Activated CD8-positive, alpha-beta T cell treated with anti-CD3 and anti-CD28 coated beads, Interleukin-2, amount 10 ng/mL, durations not matched to agents 7 days and 5 days (primary cell): ENCODE measurements at regions of chr22 and their contacts with region 1.

Region 1: DNA sequence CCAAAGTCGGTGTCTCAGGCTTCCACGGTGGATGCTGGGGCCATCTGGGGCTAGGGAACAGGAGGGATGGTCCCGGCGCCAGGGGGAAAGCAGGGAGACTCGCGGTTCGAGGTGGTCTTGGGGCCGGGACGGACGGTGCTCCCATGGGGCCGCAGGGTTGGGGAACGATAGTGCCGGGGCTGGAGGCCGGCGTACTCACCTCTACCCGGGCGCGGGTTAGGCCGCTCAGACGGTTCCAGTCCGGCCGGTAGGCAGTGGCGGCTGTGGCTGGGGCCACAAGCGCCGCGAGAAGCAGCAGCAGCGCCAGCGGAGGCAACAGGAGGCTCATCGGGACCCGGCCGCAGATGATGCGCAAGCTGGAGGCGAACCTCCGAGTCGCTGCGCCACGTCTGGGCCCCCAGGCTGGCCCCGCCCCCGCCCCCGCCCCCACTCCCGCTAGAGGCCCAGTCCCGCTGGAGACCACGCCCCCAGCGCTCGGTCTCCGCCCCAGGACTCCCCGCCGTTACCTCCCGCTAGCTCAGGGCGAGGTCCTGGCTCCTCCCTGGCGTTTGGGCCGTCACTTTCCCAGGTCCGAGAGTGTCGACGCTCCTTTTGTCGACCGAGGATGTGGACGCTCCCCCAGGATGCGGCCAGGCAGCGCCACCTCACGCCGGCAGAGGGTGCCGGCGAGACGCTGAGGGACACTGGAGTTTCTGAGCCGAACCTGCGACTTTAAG is at the start of gene SELENOM:
- DNase-seq: peak; percentile 90
- ATAC-seq: peak; percentile 97
- H3K4me3 Mint-ChIP-seq: peak within 1 kb of the TSS; percentile 86
- H3K27ac Mint-ChIP-seq: peak within 1 kb of the TSS; percentile 72
- H3K4me1 Mint-ChIP-seq: peaks cover 10% of the 10 kb centered on the region
- H3K27me3 Mint-ChIP-seq: no peaks in the 10 kb centered on the region
- total RNA-seq, gene SELENOM: 0.76 to 0.87 TPM

Region 2: GRCh38 chr22:31036671-31037550 is 70.4 kb before region 1 on chr22:
- CTCF ChIA-PET with region 1: no interaction called
- POLR2A ChIA-PET with region 1: no interaction called
- DNase-seq: no peak
- ATAC-seq: no peak
- H3K4me3 Mint-ChIP-seq: no peak overlapping the region
- H3K27ac Mint-ChIP-seq: no peak overlapping the region
- H3K4me1 Mint-ChIP-seq: no peaks in the 10 kb centered on the region
- H3K27me3 Mint-ChIP-seq: no peaks in the 10 kb centered on the region

Region 3: DNA sequence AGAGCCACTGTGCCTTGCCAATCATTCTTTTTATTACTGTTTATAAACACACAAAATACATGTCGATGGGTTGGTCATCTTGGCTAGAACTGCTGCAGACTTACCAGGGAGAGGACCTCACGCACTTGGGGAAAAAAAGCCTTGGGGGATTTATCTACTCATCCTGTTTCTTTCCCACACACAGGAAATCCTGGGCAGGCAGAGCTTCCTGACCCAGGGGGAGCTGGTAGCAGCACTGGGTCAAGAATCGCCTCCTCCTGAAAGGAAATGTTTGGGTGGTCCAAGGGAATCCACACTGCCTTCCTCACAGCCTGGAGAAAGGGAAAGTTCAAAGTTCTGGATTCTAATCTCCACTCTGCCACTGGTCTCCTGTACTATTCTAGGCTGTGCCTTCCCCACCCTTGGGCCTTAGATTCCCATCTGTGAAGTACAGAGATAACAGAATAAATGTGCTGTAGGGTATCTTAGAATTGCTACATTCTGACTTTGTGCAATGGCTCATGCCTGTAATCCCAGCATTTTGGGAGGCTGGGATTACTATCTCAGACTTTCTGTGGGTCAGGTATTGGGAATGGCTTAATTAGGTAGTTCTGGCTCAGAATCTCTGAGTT is 57.4 kb before region 1 on chr22:
- CTCF ChIA-PET with region 1: no interaction called
- POLR2A ChIA-PET with region 1: no interaction called
- DNase-seq: no peak
- ATAC-seq: no peak
- H3K4me3 Mint-ChIP-seq: no peak overlapping the region
- H3K27ac Mint-ChIP-seq: no peak overlapping the region
- H3K4me1 Mint-ChIP-seq: no peaks in the 10 kb centered on the region
- H3K27me3 Mint-ChIP-seq: no peaks in the 10 kb centered on the region

Region 4: DNA sequence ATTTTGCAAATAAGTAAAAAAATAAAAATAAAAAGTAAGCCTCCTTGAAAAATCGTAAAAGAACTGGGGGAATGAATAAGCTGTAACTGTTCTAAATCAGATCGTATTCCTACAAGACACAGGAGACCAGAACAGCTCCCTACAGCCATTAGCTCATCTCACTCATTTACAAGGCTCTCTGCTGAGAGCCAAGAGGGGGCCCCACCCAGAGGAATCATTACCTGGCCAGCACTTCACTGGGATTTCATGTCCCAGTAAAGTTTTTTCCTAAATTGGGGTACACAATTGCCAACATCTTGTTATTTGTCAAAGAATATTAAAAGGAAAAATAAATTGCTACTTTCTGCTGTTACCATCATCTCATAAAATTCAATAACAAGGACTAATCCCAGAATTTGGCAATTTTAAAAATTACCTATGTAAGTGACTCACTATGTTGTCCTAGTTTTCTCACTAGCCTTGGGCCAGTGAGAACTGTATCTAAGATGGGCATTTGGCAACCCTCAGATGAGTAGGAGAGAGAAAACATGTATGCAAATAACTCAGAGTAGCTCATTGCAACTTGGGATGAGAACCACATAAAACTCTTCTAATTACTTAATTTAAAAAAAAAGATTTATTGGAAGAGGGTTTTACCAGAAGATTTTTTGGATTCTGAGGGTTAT is 44.6 kb before region 1 on chr22:
- CTCF ChIA-PET with region 1: no interaction called
- POLR2A ChIA-PET with region 1: no interaction called
- DNase-seq: no peak
- ATAC-seq: no peak
- H3K4me3 Mint-ChIP-seq: no peak overlapping the region
- H3K27ac Mint-ChIP-seq: no peak overlapping the region
- H3K4me1 Mint-ChIP-seq: no peaks in the 10 kb centered on the region
- H3K27me3 Mint-ChIP-seq: no peaks in the 10 kb centered on the region

Region 5: DNA sequence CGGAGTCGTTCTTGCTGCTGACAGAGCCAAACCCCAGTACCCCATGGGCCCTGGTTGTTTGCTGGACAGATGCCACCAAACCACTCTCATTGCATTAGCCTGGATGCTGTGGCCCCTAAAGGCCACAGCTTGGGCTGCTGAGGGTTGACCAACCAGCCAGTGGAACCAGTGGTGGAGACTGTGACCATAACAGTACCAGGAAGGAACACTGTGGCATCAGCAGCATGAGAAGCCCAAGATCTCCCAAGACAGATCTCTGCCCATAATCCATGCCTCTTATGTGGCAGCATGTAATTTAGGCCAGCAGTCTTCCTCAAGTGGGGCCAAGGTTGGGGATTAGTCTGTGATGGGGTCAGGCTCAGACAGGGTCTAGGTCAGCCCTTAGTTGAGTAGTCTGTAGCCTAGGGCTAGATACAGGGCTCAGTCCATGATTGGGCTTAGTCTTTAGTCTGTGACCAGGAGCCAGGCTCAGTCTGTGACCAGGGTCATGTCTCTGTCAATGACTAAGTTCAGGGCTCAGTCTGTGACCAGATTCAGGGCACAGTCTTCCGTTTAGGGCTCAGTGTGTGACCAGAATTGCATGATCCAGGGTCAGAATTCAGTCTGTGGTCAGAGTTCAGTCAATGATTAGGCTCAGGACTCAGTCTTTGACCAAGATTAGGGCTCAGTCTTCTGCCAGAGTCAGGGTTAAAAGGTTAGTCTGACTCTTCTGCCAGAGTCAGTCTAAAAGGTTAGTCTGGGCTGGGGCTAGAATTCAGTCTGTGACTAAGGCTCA is 10.9 kb after region 1 on chr22:
- CTCF ChIA-PET with region 1: interaction called, 11 read pairs
- POLR2A ChIA-PET with region 1: no interaction called
- DNase-seq: no peak
- ATAC-seq: no peak
- H3K4me3 Mint-ChIP-seq: no peak overlapping the region
- H3K27ac Mint-ChIP-seq: no peak overlapping the region
- H3K4me1 Mint-ChIP-seq: no peaks in the 10 kb centered on the region
- H3K27me3 Mint-ChIP-seq: peaks cover 3% of the 10 kb centered on the region

Region 6: DNA sequence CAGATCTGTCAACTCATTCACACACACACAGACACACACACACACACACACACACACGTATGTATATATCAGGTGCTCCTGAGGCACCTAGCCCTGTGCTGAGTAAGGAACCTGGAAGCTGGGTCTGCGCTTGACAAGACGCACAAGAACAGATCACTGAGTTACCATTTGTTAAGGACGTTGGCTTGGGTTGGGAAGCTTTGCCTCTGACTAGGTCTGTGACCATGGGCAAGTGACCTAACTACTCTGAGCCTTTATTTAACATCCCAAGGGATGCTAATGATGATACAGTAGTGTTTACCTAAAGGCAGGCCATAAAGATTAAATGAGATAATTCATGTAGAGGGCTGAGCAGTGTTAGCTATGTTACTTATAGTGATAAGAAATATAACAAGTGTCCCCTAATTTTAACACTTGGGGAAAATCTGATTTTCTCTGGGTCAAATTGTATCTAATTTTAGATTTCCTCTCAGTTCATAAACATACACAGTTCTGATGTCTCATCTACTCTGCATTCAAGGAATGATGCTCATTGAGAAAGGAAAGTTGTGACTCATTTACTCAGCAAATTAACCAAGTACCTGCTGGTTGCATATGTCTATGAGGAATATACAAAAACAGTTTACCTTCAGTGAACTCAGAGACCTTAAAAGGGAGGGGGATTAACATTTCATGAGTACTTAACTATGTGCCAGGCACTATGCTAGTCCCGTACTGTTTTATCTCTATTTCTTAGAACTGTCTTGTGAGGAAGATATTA is 66.2 kb after region 1 on chr22:
- CTCF ChIA-PET with region 1: no interaction called
- POLR2A ChIA-PET with region 1: no interaction called
- DNase-seq: no peak
- ATAC-seq: no peak
- H3K4me3 Mint-ChIP-seq: no peak overlapping the region
- H3K27ac Mint-ChIP-seq: peak overlapping the region; percentile 6
- H3K4me1 Mint-ChIP-seq: peaks cover 9% of the 10 kb centered on the region
- H3K27me3 Mint-ChIP-seq: no peaks in the 10 kb centered on the region

Region 7: GRCh38 chr22:31230871-31231621 is 123.7 kb after region 1 on chr22:
- CTCF ChIA-PET with region 1: interaction called, 15 read pairs
- POLR2A ChIA-PET with region 1: no interaction called
- DNase-seq: peak; percentile 63
- ATAC-seq: peak; percentile 68
- H3K4me3 Mint-ChIP-seq: no peak overlapping the region
- H3K27ac Mint-ChIP-seq: no peak overlapping the region
- H3K4me1 Mint-ChIP-seq: peaks cover 56% of the 10 kb centered on the region
- H3K27me3 Mint-ChIP-seq: no peaks in the 10 kb centered on the region